Naive thymus-derived CD8-positive, alpha-beta T cell (primary cell): ENCODE measurements at regions of chr17 and their contacts with region 1.

Region 1: GRCh38 chr17:63741221-63742049 is at the start of gene STRADA:
- DNase-seq: peak; percentile 93 to 99 (median 98)
- ATAC-seq: peak; percentile 83 to 88
- H3K4me3 Mint-ChIP-seq: peak within 1 kb of the TSS; percentile 86 to 98 (median 93)
- H3K27ac Mint-ChIP-seq: peak within 1 kb of the TSS; percentile 91 to 98 (median 96)
- H3K4me1 Mint-ChIP-seq: peaks cover 15 to 28% (median 19%) of the 10 kb centered on the region in 4 donors
- H3K27me3 Mint-ChIP-seq: no peaks in the 10 kb centered on the region
- polyA plus RNA-seq, gene STRADA: 17.8 to 24.5 (median 23.6) TPM

Region 2: GRCh38 chr17:63707151-63707550 is 34.3 kb before region 1 on chr17:
- POLR2A ChIA-PET with region 1: interaction called, 106 read pairs
- DNase-seq: peak in 5 of 10 donors; percentile 54 to 65 (median 58)
- ATAC-seq: peak; percentile 23 to 67
- H3K4me3 Mint-ChIP-seq: peak overlapping the region; percentile 69 to 98 (median 82)
- H3K27ac Mint-ChIP-seq: peak overlapping the region; percentile 75 to 99 (median 95)
- H3K4me1 Mint-ChIP-seq: peaks cover 42 to 84% (median 79%) of the 10 kb centered on the region in 4 donors
- H3K27me3 Mint-ChIP-seq: no peaks in the 10 kb centered on the region

Region 3: GRCh38 chr17:63751806-63752205 is 10.4 kb after region 1 on chr17:
- POLR2A ChIA-PET with region 1: interaction called, 10 read pairs
- DNase-seq: peak in 4 of 10 donors; percentile 17 to 35 (median 32)
- ATAC-seq: peak; percentile 82 to 87
- H3K4me3 Mint-ChIP-seq: peak overlapping the region; percentile 17 to 70 (median 46)
- H3K27ac Mint-ChIP-seq: peak overlapping the region; percentile 51 to 88 (median 84)
- H3K4me1 Mint-ChIP-seq: peaks cover 5 to 14% (median 10%) of the 10 kb centered on the region in 4 donors
- H3K27me3 Mint-ChIP-seq: no peaks in the 10 kb centered on the region

Region 4: DNA sequence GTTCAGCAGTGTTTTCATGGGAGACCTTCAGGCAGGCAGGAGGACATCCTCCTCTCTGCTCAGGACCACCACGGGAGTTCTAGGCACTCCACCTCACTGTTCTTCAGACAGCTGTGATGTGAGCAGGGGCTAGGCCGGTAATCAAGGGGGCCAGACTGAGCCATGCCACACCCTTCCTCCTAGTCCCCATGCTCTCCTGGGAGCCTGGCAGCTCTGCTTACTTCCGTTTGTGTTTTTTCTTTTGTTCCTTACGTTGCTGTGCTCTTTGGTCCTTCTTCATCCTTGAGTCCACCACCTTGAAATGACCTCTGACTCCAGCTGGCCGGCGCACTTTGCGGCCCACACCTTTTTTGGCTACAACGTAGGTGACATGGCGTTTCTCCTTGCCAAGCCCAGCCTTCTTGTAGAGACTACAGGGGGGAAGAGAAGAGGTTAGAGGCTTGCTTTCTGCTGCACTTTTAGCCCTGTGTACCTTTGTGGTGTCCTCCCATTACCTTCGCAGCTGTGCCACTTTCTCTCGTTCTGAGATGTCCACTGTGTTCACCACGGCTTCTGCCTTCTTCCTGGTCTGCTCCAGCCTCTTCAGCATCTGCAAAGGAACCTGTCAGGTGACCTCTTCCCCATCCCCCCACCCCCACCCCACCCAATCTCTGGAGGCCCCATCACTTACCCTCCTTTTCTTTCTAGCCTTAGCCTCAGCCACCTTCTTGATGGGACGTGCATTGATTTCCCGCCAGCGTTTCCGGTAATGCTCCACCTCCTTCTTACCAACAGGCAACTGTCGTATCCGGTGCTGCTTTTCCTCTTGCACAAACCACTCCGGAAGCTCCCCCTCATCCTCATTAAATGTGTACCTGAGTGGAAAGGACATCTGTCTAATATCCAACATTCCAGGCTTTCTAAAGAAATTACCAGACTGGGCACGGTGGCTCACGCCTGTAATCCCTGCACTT is 78.4 kb after region 1 on chr17:
- POLR2A ChIA-PET with region 1: no interaction called
- DNase-seq: peak in 1 of 10 donors; percentile 25
- ATAC-seq: peak; percentile 27 to 51
- H3K4me3 Mint-ChIP-seq: peak overlapping the region in 6 of 10 donors; percentile 18 to 82 (median 50)
- H3K27ac Mint-ChIP-seq: peak overlapping the region; percentile 12 to 90 (median 76)
- H3K4me1 Mint-ChIP-seq: peaks cover 20 to 32% (median 27%) of the 10 kb centered on the region in 4 donors
- H3K27me3 Mint-ChIP-seq: no peaks in the 10 kb centered on the region

Region 5: DNA sequence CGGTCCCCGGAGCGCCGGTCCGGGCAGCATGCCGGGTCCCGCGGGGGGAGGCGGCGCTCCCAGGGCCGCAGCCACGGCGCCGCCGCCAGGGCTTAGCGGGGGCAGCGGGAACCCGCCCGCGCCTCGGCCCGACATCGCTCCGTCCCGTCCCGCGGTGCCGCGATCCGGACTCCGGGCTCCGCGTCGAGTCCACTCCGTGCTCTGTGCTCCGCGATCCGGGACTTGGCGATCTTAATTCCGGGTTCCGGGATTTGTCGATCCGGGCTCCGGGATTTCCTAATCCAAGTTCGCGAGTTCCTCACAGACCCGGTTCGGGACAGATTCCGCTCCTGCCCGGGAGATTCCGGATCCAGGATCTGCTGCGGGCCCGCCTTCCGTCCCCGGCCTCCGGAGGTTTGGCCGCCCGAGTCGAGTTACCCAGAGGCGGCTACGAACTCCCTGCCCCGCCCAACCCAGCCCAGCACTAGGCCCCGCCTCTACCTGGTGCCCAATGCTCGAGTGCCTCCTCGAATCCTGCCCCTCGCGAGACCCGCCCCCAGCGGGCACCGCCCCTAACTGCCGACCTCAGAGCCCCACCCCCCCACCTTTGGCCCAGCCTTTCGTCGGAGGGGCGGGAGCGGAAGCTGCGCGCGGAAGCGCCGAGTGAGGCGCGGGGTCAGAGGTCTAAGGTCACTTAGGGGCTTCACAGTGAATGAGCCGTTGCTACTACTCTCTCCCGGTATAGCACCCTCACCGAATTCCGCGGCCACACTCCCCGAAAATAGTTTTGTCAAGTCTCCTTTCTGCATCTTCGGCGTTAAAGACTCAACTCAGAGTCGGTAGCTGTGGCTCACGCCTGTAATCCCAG is 101.3 kb after region 1 on chr17 and contains the start of gene SMARCD2:
- POLR2A ChIA-PET with region 1: interaction called, 12 read pairs
- DNase-seq: peak; percentile 94 to 99 (median 98)
- ATAC-seq: peak; percentile 86 to 88
- H3K4me3 Mint-ChIP-seq: peak within 1 kb of the TSS; percentile 90 to 98 (median 94)
- H3K27ac Mint-ChIP-seq: peak within 1 kb of the TSS; percentile 90 to 97 (median 94)
- H3K4me1 Mint-ChIP-seq: peaks cover 24 to 52% (median 52%) of the 10 kb centered on the region in 4 donors
- H3K27me3 Mint-ChIP-seq: no peaks in the 10 kb centered on the region
- polyA plus RNA-seq, gene SMARCD2: 65.9 to 112 (median 91.5) TPM

Region 6: GRCh38 chr17:64091116-64091515 is 349.7 kb after region 1 on chr17:
- POLR2A ChIA-PET with region 1: no interaction called
- DNase-seq: no peak
- ATAC-seq: no peak
- H3K4me3 Mint-ChIP-seq: peak overlapping the region in 1 of 10 donors; percentile 37
- H3K27ac Mint-ChIP-seq: peak overlapping the region in 5 of 10 donors; percentile 21 to 90 (median 81)
- H3K4me1 Mint-ChIP-seq: peaks cover 17 to 74% (median 33%) of the 10 kb centered on the region in 4 donors
- H3K27me3 Mint-ChIP-seq: no peaks in the 10 kb centered on the region